A549 (cell line): ENCODE measurements at regions of chr17 and their contacts with region 1.

Region 1: DNA sequence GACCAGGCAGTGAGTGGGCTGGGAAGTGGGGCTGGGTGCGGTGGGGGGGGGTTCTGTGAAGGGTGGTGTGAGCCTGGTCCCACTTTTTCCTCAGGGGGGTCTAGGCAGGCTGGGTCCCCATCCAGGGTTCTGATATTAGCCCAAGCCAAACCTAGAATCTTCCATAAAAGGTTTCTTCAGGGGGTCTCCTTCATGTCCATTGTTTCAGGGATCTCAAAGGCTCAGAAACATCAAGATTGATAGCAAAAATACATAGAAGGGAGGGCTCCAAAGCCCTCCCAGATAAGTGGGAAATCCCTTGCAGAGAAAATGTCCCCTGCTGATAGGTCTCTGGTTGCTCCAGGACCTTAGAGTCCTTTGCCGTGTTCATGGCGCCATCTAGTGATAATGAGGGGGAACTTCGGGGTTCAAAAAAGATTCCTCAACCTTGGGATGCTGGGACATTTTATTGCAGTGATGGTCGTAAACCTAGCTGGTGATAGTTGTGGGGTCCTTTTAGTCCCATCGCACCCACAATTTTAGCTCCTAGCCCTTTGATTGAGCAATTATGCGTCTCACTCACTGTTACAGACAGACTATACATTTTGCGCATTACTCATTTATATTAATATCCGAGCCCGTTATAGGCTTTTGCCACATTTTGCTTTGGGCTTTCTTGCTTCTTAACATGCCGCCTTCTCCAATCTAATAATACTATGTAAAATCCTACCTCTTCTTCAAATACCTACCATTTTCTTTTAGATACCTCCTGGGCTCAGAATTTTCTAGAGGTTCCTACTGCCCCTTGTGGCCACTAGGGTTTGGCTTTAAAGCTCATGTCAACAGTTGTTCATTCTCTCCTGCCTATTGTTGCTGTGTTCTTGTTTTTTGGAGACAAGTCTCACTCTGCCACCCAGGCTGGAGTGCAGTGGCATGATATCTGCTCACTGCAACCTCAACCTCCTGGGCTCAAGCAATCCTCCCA is 35.1 kb downstream of the IGF2BP1 start:
- DNase-seq: peak; percentile 87 to 96
- ATAC-seq: peak; percentile 80 to 83
- H3K4me3 ChIP-seq: no peak overlapping the region
- H3K27ac ChIP-seq: peak overlapping the region; percentile 22 to 63; a peak in 5 of 6 replicates
- H3K4me1 ChIP-seq: peaks cover 15% of the 10 kb centered on the region
- CTCF ChIP-seq: peak; percentile 98
- EP300 ChIP-seq: no peak
- POLR2A ChIP-seq: no peak
- RAD21 ChIP-seq: peak; percentile 98 to 99

Region 2: GRCh38 chr17:48804925-48805411 is 227.3 kb before region 1 on chr17:
- CTCF ChIA-PET with region 1: interaction called, 17 read pairs
- POLR2A ChIA-PET with region 1: no interaction called
- DNase-seq: peak; percentile 78 to 96
- ATAC-seq: peak; percentile 95
- H3K4me3 ChIP-seq: no peak overlapping the region
- H3K27ac ChIP-seq: peak overlapping the region; percentile 53 to 73
- H3K4me1 ChIP-seq: peaks cover 56% of the 10 kb centered on the region
- CTCF ChIP-seq: peak; percentile 97
- EP300 ChIP-seq: no peak
- POLR2A ChIP-seq: no peak
- RAD21 ChIP-seq: peak; percentile 99

Region 3: GRCh38 chr17:48843172-48843900 is 188.9 kb before region 1 on chr17:
- CTCF ChIA-PET with region 1: no interaction called
- POLR2A ChIA-PET with region 1: no interaction called
- DNase-seq: no peak
- ATAC-seq: no peak
- H3K4me3 ChIP-seq: no peak overlapping the region
- H3K27ac ChIP-seq: no peak overlapping the region
- H3K4me1 ChIP-seq: peaks cover 24% of the 10 kb centered on the region; the same call in 2 of the 3 replicates
- CTCF ChIP-seq: no peak
- EP300 ChIP-seq: no peak
- POLR2A ChIP-seq: no peak
- RAD21 ChIP-seq: no peak

Region 4: GRCh38 chr17:48901241-48901640 is 131.0 kb before region 1 on chr17:
- CTCF ChIA-PET with region 1: interaction called, 32 read pairs
- POLR2A ChIA-PET with region 1: no interaction called
- DNase-seq: no peak
- ATAC-seq: peak; percentile 17 to 44; a peak in 4 of 6 replicates
- H3K4me3 ChIP-seq: no peak overlapping the region
- H3K27ac ChIP-seq: no peak overlapping the region
- H3K4me1 ChIP-seq: peaks cover 27% of the 10 kb centered on the region
- CTCF ChIP-seq: no peak
- EP300 ChIP-seq: no peak
- POLR2A ChIP-seq: no peak; the same call in 1 of the 2 replicates
- RAD21 ChIP-seq: no peak

Region 5: GRCh38 chr17:48944519-48945260 is 87.6 kb before region 1 on chr17 and contains the start of gene SNF8:
- CTCF ChIA-PET with region 1: interaction called, 383 read pairs
- POLR2A ChIA-PET with region 1: interaction called, 13 read pairs
- DNase-seq: peak; percentile 95 to 99
- ATAC-seq: peak; percentile 95 to 98
- H3K4me3 ChIP-seq: peak within 1 kb of the TSS; percentile 60
- H3K27ac ChIP-seq: peak within 1 kb of the TSS; percentile 86 to 92
- H3K4me1 ChIP-seq: peaks cover 19% of the 10 kb centered on the region; the same call in 2 of the 3 replicates
- CTCF ChIP-seq: no peak
- EP300 ChIP-seq: no peak
- POLR2A ChIP-seq: peak; percentile 72
- RAD21 ChIP-seq: peak in 1 of 2 experiments; percentile 50; a peak in 4 of 5 replicates
- polyA plus RNA-seq, gene SNF8: 187 and 209 TPM in 2 replicates

Region 6: DNA sequence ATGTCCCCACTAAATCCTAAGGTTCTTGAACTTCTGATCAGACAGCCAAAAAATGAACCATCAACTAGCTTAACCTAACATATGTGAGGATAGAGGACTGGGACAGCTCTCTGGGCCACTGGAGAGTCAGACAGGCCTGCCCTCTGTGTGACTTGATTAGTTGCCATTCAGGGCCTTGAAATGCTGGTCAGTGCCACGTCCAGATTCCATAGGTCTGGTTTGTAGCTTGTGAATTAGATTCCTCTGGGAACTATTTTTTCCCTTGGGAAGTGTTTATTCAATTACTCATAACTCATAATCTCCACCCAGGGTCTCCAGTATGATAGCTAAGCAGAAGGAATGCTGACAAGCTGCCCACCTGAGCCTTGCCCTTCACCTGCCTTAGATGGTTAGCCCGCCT is 13.1 kb after region 1 on chr17:
- CTCF ChIA-PET with region 1: interaction called, 107 read pairs
- POLR2A ChIA-PET with region 1: no interaction called
- DNase-seq: no peak
- ATAC-seq: peak in 1 of 2 experiments; percentile 26; a peak in 1 of 6 replicates
- H3K4me3 ChIP-seq: no peak overlapping the region
- H3K27ac ChIP-seq: no peak overlapping the region
- H3K4me1 ChIP-seq: peaks cover 14% of the 10 kb centered on the region
- CTCF ChIP-seq: no peak
- EP300 ChIP-seq: no peak
- POLR2A ChIP-seq: no peak
- RAD21 ChIP-seq: no peak

Region 7: GRCh38 chr17:49191917-49192741 is 159.9 kb after region 1 on chr17:
- CTCF ChIA-PET with region 1: interaction called, 17 read pairs
- POLR2A ChIA-PET with region 1: interaction called, 6 read pairs
- DNase-seq: peak; percentile 75 to 98
- ATAC-seq: peak; percentile 75 to 77
- H3K4me3 ChIP-seq: peak overlapping the region; percentile 64
- H3K27ac ChIP-seq: peak overlapping the region; percentile 93 to 96
- H3K4me1 ChIP-seq: peaks cover 13% of the 10 kb centered on the region
- CTCF ChIP-seq: peak; percentile 70
- EP300 ChIP-seq: peak in 1 of 2 experiments; percentile 11; a peak in 1 of 5 replicates
- POLR2A ChIP-seq: peak; percentile 29
- RAD21 ChIP-seq: peak; percentile 40 to 66